ENCODE measurements at regions of chr12 and their contacts with region 1.

Region 1: DNA sequence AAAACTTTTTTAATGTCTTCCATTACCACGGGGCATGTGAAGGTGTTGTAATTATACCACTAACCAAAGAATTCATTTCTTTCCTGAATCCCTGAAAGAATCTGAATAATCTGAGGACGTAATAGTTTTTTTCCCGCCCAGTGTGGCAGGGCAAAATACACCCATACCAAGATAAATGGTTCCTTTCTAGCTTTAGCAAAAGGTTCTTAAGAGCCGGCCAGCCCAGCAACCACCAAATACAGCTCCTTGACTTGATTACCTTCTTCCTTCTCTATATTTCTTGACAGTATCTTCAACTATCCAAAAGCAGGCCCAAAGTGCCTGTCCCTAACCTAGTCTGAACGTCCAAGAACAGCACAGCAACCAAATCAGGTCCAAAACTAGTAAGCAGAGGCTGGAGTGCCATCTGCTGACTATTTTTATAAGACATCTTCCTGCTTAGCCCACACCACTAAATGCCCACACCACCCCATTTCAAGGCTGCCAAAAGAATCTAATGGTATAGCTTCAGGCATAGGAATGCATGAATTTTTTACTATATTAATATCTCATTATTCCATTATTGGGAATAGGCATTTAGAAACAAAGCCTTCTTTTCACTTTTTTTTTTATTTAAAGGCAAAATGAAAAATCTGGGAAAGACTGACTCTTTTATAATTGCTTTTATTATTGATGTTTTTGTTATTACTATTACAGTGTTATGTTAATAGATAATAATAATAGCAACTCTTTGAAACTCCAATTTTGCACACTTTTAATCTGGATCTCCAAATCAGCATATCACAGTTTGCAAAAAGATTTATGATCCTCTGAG is 524.4 kb downstream of the MED13L start:
- DNase-seq: peak; percentile 52
- H3K4me3 ChIP-seq: peak overlapping the region in 1 of 3 experiments; percentile 67
- H3K27ac ChIP-seq: no peak overlapping the region
- H3K4me1 ChIP-seq: peaks cover 9% of the 10 kb centered on the region
- H3K27me3 ChIP-seq: no peaks in the 10 kb centered on the region
- CTCF ChIP-seq: peak; percentile 55 to 67

Region 2: GRCh38 chr12:114662512-114663177 is 1090.5 kb before region 1 on chr12:
- CTCF ChIA-PET with region 1: no interaction called
- dilution Hi-C with region 1: no loop called
- in situ Hi-C with region 1: no loop called
- intact Hi-C with region 1: loop called (anchors 1 kb)
- DNase-seq: peak; percentile 78
- H3K4me3 ChIP-seq: no peak overlapping the region
- H3K27ac ChIP-seq: no peak overlapping the region
- H3K4me1 ChIP-seq: peaks cover 4% of the 10 kb centered on the region
- H3K27me3 ChIP-seq: no peaks in the 10 kb centered on the region
- CTCF ChIP-seq: peak; percentile 89 to 95

Region 3: DNA sequence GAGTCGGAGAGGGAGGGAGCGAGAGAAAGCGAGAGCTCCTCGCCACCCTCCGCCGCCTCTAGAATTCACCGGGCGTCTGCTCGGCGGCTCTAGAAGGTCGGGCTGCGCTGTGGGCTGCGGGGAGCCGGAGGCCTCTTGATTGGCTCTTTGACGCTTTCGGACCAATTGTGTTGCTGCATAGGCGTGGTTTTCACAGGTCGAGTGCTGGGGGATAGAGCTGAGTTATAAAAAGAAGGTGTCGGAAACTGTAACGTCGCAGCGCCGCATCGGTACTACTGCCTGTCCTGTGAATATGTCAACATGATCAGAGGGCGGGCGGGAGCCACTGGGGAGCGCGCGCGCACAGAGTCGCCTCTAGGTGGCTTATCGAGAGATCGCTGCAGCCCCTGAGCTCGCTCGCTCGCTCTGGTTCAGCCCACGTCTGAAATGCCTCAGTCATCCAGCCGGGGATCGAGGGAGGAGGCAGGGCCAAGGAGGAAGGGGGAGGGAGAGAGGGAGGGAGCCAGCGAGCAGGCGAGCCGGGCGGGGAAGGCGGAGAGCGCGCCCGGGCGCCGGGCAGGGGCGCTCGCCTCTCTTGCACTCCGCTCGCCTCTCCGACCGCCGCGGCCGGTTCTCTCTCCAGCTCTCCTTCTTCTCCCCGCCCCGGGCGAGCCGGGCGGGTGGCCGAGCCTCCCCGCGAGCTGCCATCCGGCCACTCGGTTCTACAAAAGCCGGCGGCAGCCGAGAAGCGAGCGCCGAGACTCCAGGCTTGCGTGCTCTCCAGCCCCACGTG is 1068.8 kb before region 1 on chr12 and contains the start of gene TBX3:
- CTCF ChIA-PET with region 1: interaction called, 7 read pairs
- dilution Hi-C with region 1: loop called (anchors 5 kb)
- in situ Hi-C with region 1: loop called (anchors 5 kb)
- intact Hi-C with region 1: loop called (anchors 1 kb)
- DNase-seq: peak; percentile 100
- H3K4me3 ChIP-seq: peak within 1 kb of the TSS; percentile 66 to 100 (median 81)
- H3K27ac ChIP-seq: peak within 1 kb of the TSS; percentile 94
- H3K4me1 ChIP-seq: peaks cover 9% of the 10 kb centered on the region
- H3K27me3 ChIP-seq: no peaks in the 10 kb centered on the region
- CTCF ChIP-seq: peak; percentile 32 to 62
- total RNA-seq, gene TBX3: 30.7 to 33.8 TPM

Region 4: DNA sequence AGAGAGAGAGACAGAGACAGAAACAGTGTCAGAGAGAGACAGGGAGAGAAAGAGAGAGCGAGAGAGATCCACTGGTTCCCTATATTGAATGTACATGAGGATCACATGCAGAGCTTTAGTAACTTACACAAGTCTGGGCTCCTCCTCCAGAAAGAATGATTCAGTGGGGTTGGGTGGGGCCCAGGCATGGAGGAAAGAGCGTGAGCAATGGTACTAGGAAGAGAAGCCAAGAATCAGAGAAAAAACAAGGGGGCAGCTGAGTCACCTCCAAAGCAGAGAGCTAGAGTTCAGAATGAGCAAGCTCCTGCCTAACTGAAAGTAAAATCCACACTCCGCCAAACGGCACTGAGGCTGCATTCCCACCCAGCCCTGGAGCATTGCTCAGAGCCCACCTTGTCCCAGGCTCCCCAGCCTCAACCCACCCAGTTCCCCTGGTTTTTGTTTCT is 399.1 kb before region 1 on chr12:
- CTCF ChIA-PET with region 1: no interaction called
- dilution Hi-C with region 1: no loop called
- in situ Hi-C with region 1: loop called in 1 of 2 experiments (anchors 25 kb)
- intact Hi-C with region 1: no loop called
- DNase-seq: peak; percentile 99
- H3K4me3 ChIP-seq: peak overlapping the region; percentile 41 to 51 (median 47)
- H3K27ac ChIP-seq: peak overlapping the region; percentile 96
- H3K4me1 ChIP-seq: peaks cover 17% of the 10 kb centered on the region
- H3K27me3 ChIP-seq: no peaks in the 10 kb centered on the region
- CTCF ChIP-seq: no peak

Region 5: DNA sequence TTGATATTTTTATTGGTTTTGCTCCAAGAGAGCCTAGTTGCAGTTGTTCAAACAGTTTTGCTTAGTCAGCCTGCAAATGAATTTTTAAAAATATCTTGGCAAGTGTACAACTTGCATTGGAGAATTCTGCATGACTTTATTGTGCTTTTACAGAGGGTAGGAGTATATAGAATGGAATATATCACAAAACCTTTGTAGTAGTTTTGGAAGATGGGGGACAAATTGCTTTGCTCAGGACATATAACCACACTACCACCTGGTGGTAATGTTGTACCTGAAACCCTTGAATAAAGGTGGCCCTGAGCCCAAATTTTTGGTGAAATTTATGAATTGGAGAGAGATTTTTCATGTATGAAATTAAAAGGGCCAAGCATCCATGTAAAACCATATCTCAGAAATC is 120.8 kb before region 1 on chr12:
- CTCF ChIA-PET with region 1: no interaction called
- dilution Hi-C with region 1: no loop called
- in situ Hi-C with region 1: no loop called
- intact Hi-C with region 1: loop called (anchors 1 kb)
- DNase-seq: peak; percentile 8
- H3K4me3 ChIP-seq: no peak overlapping the region
- H3K27ac ChIP-seq: no peak overlapping the region
- H3K4me1 ChIP-seq: no peaks in the 10 kb centered on the region
- H3K27me3 ChIP-seq: peaks cover 3% of the 10 kb centered on the region
- CTCF ChIP-seq: peak; percentile 23 to 61